A673 (cell line): ENCODE measurements at regions of chr6 and their contacts with region 1.

Region 1: GRCh38 chr6:114108119-114109002 is 137.4 kb upstream of the HDAC2 start:
- DNase-seq: peak; percentile 72
- H3K4me3 ChIP-seq: no peak overlapping the region
- H3K27ac ChIP-seq: no peak overlapping the region
- H3K4me1 ChIP-seq: no peaks in the 10 kb centered on the region
- H3K27me3 ChIP-seq: peaks cover 14% of the 10 kb centered on the region
- CTCF ChIP-seq: peak; percentile 84

Region 2: GRCh38 chr6:113980937-113981554 is 127.3 kb before region 1 on chr6:
- CTCF ChIA-PET with region 1: interaction called, 11 read pairs
- POLR2A ChIA-PET with region 1: no interaction called
- intact Hi-C with region 1: loop called (anchors 5 kb)
- DNase-seq: peak; percentile 52
- H3K4me3 ChIP-seq: no peak overlapping the region
- H3K27ac ChIP-seq: no peak overlapping the region
- H3K4me1 ChIP-seq: no peaks in the 10 kb centered on the region
- H3K27me3 ChIP-seq: no peaks in the 10 kb centered on the region
- CTCF ChIP-seq: peak; percentile 63

Region 3: DNA sequence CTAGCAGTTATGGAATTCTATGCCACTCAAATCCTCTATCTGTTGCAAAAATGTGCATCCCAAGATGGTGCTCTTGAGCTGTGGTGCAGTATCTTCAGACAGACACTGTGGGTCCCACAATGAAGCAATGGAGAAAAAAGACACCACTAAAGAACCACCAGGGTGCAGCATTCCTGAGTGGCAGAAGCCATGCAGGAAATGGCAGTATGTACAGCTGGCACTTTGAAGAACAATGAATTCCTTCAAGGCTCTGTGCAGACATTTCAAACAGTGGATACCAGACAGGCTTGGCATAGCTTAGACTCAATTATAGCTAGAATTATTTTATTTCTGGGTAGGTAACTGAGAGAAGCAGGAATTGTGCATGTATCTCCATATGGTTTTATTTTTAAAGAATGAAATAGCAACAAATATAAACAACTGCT is 113.4 kb before region 1 on chr6:
- CTCF ChIA-PET with region 1: interaction called, 21 read pairs
- POLR2A ChIA-PET with region 1: no interaction called
- intact Hi-C with region 1: loop called (anchors 1 kb)
- DNase-seq: peak; percentile 88
- H3K4me3 ChIP-seq: no peak overlapping the region
- H3K27ac ChIP-seq: no peak overlapping the region
- H3K4me1 ChIP-seq: no peaks in the 10 kb centered on the region
- H3K27me3 ChIP-seq: no peaks in the 10 kb centered on the region
- CTCF ChIP-seq: peak; percentile 87

Region 4: DNA sequence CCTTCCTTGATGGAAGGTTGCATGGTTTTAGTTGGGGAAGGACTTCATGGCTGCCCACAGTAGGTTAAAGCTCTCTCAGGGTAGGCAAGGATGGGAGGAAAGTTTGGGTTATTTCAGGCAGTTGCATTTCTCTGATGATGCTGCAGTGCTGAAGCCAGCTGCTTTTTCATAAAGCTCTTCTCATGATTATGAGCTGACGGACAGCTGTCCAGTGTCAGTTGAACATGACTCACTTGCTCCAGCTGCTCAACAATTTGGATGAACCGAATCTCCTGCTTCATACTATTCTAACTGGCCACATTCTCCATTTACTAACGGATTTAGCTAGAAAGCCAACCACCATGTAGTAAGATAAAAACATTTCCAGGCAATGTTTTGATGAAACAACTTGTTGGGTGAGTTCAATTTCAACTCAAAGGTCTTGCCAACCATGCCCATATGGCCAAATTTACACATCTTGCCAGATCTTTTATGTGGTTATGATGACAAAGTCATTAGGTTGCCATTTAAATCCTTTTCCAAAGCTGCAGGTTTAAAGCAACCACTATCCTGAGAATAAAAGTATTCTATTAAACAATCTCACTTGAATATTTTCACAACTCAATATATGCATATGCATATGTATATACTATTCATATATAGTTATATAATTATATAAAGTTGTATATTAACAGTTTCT is 108.6 kb after region 1 on chr6:
- CTCF ChIA-PET with region 1: no interaction called
- POLR2A ChIA-PET with region 1: no interaction called
- intact Hi-C with region 1: no loop called
- DNase-seq: no peak
- H3K4me3 ChIP-seq: no peak overlapping the region
- H3K27ac ChIP-seq: no peak overlapping the region
- H3K4me1 ChIP-seq: no peaks in the 10 kb centered on the region
- H3K27me3 ChIP-seq: no peaks in the 10 kb centered on the region
- CTCF ChIP-seq: no peak

Region 5: DNA sequence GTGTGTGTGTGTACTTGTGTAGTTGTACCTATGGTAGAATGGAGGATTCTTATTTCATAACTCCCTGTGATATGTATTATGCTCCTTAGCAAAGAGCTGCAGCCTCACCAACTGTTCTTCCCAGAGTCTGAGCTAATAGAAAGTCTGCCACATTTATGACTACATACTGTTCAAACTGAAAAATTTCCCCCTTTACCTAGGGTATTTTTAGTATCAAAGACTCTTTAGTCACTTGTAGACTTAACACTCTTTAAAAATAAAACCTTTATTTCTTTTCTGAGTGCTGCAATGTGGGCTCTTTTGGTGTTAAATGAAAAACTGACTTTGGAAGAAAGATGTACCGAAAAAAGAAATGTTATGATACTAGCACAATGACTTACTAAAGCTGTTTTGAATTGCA is 274.0 kb after region 1 on chr6:
- CTCF ChIA-PET with region 1: no interaction called
- POLR2A ChIA-PET with region 1: no interaction called
- intact Hi-C with region 1: no loop called
- DNase-seq: no peak
- H3K4me3 ChIP-seq: no peak overlapping the region
- H3K27ac ChIP-seq: no peak overlapping the region
- H3K4me1 ChIP-seq: no peaks in the 10 kb centered on the region
- H3K27me3 ChIP-seq: no peaks in the 10 kb centered on the region
- CTCF ChIP-seq: no peak